ENCODE measurements at regions of chr6 and their contacts with region 1.

Region 1: GRCh38 chr6:54717849-54718455 is 128.6 kb upstream of the FAM83B start:
- DNase-seq: peak; percentile 54
- H3K4me3 Mint-ChIP-seq: no peak overlapping the region
- H3K27ac Mint-ChIP-seq: no peak overlapping the region
- H3K4me1 Mint-ChIP-seq: no peaks in the 10 kb centered on the region
- H3K27me3 Mint-ChIP-seq: no peaks in the 10 kb centered on the region

Region 2: GRCh38 chr6:54706844-54707605 is 10.9 kb before region 1 on chr6:
- CTCF ChIA-PET with region 1: interaction called, 14 read pairs
- POLR2A ChIA-PET with region 1: no interaction called
- intact Hi-C with region 1: no loop called
- DNase-seq: no peak
- H3K4me3 Mint-ChIP-seq: no peak overlapping the region
- H3K27ac Mint-ChIP-seq: no peak overlapping the region
- H3K4me1 Mint-ChIP-seq: no peaks in the 10 kb centered on the region
- H3K27me3 Mint-ChIP-seq: no peaks in the 10 kb centered on the region

Region 3: GRCh38 chr6:55239099-55239498 is 521.1 kb after region 1 on chr6:
- CTCF ChIA-PET with region 1: no interaction called
- POLR2A ChIA-PET with region 1: no interaction called
- intact Hi-C with region 1: loop called (anchors 2 kb)
- DNase-seq: no peak
- H3K4me3 Mint-ChIP-seq: no peak overlapping the region
- H3K27ac Mint-ChIP-seq: no peak overlapping the region
- H3K4me1 Mint-ChIP-seq: no peaks in the 10 kb centered on the region
- H3K27me3 Mint-ChIP-seq: no peaks in the 10 kb centered on the region